ENCODE measurements at regions of chr7 and their contacts with region 1.

Region 1: DNA sequence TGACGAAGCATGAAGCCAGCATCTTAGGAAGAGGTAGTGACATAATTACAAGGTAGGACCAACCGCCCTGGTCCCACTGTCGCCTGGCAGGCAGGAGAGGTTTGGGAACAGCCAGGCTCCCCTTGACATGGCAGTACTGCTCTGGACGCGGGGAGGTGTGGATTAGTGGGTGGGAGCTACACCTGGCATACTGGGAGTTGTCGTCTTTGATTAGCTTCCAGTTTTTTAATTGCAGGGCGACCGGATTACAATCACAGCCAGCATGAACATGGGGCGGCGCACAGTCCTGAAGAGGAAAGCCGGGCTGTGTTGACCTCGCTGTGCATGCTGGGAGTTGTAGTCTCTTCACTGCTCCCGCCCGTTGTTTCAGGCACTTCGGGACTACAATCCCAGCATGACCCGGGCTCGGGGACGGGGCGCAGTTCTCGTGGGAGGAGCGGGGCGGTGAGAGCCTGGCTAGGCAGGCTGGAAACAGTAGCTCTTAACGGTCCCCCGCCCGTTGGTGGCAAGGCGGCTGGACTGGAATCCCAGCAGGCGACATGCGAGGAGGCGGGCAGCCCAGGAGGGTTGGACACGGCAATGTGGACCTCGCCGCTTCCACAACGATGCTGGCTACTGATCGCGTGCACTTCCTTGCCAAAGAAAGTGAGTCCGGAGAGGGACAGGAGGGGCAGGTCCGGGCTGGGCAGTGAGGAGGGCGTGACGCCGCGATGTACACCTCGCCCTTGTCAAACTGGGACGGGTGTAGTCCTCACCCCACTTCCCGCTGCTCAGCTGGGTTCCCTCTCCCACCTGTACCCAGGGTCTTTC is 98.0 kb upstream of the ZNF722 start:
- DNase-seq: peak; percentile 82 to 94 (median 88)
- ATAC-seq: peak; percentile 93
- H3K4me3 ChIP-seq: peak overlapping the region; percentile 67 to 98
- H3K4me3 Mint-ChIP-seq: peak overlapping the region; percentile 92
- H3K27ac ChIP-seq: peak overlapping the region; percentile 83 to 96
- H3K27ac Mint-ChIP-seq: peak overlapping the region; percentile 93
- H3K4me1 ChIP-seq: peaks cover 4% of the 10 kb centered on the region
- H3K4me1 Mint-ChIP-seq: peaks cover 6% of the 10 kb centered on the region
- H3K27me3 ChIP-seq: no peaks in the 10 kb centered on the region
- H3K27me3 Mint-ChIP-seq: no peaks in the 10 kb centered on the region
- CTCF ChIP-seq: no peak

Region 2: GRCh38 chr7:63925623-63926460 is 25.2 kb after region 1 on chr7:
- CTCF ChIA-PET with region 1: interaction called, 3 read pairs
- POLR2A ChIA-PET with region 1: interaction called, 6 read pairs
- intact Hi-C with region 1: loop called in 1 of 2 experiments (anchors 1 kb)
- DNase-seq: peak; percentile 80 to 95 (median 90)
- ATAC-seq: peak; percentile 95
- H3K4me3 ChIP-seq: peak overlapping the region; percentile 76 to 93
- H3K4me3 Mint-ChIP-seq: peak overlapping the region; percentile 94
- H3K27ac ChIP-seq: peak overlapping the region; percentile 84 to 88
- H3K27ac Mint-ChIP-seq: peak overlapping the region; percentile 92
- H3K4me1 ChIP-seq: no peaks in the 10 kb centered on the region
- H3K4me1 Mint-ChIP-seq: peaks cover 13% of the 10 kb centered on the region
- H3K27me3 ChIP-seq: no peaks in the 10 kb centered on the region
- H3K27me3 Mint-ChIP-seq: no peaks in the 10 kb centered on the region
- CTCF ChIP-seq: no peak

Region 3: GRCh38 chr7:64313740-64314491 is 413.3 kb after region 1 on chr7 and contains the start of gene ZNF736:
- CTCF ChIA-PET with region 1: no interaction called
- POLR2A ChIA-PET with region 1: interaction called, 3 read pairs
- intact Hi-C with region 1: loop called in 1 of 2 experiments (anchors 5 kb)
- DNase-seq: peak; percentile 71 to 94 (median 86)
- ATAC-seq: peak; percentile 100
- H3K4me3 ChIP-seq: peak within 1 kb of the TSS; percentile 66 to 98
- H3K4me3 Mint-ChIP-seq: peak within 1 kb of the TSS; percentile 99
- H3K27ac ChIP-seq: peak within 1 kb of the TSS; percentile 76 to 88
- H3K27ac Mint-ChIP-seq: peak within 1 kb of the TSS; percentile 98
- H3K4me1 ChIP-seq: peaks cover 25% of the 10 kb centered on the region
- H3K4me1 Mint-ChIP-seq: peaks cover 32% of the 10 kb centered on the region
- H3K27me3 ChIP-seq: no peaks in the 10 kb centered on the region
- H3K27me3 Mint-ChIP-seq: no peaks in the 10 kb centered on the region
- CTCF ChIP-seq: no peak
- total RNA-seq, gene ZNF736: 23.4 to 26.6 TPM

Region 4: GRCh38 chr7:64630496-64630895 is 729.9 kb after region 1 on chr7:
- CTCF ChIA-PET with region 1: no interaction called
- POLR2A ChIA-PET with region 1: no interaction called
- intact Hi-C with region 1: no loop called
- DNase-seq: peak in 2 of 9 experiments; percentile 22 to 32
- ATAC-seq: peak; percentile 36
- H3K4me3 ChIP-seq: no peak overlapping the region
- H3K4me3 Mint-ChIP-seq: no peak overlapping the region
- H3K27ac ChIP-seq: no peak overlapping the region
- H3K27ac Mint-ChIP-seq: no peak overlapping the region
- H3K4me1 ChIP-seq: no peaks in the 10 kb centered on the region
- H3K4me1 Mint-ChIP-seq: no peaks in the 10 kb centered on the region
- H3K27me3 ChIP-seq: no peaks in the 10 kb centered on the region
- H3K27me3 Mint-ChIP-seq: no peaks in the 10 kb centered on the region
- CTCF ChIP-seq: peak; percentile 46

Region 5: GRCh38 chr7:64665980-64666662 is 765.5 kb after region 1 on chr7 and contains the start of gene ZNF107:
- CTCF ChIA-PET with region 1: no interaction called
- POLR2A ChIA-PET with region 1: no interaction called
- intact Hi-C with region 1: loop called in 1 of 2 experiments (anchors 2 kb)
- DNase-seq: peak; percentile 73 to 94 (median 86)
- ATAC-seq: peak; percentile 95
- H3K4me3 ChIP-seq: peak within 1 kb of the TSS; percentile 93 to 95
- H3K4me3 Mint-ChIP-seq: peak within 1 kb of the TSS; percentile 96
- H3K27ac ChIP-seq: peak within 1 kb of the TSS; percentile 92 to 93
- H3K27ac Mint-ChIP-seq: peak within 1 kb of the TSS; percentile 96
- H3K4me1 ChIP-seq: peaks cover 14% of the 10 kb centered on the region
- H3K4me1 Mint-ChIP-seq: peaks cover 64% of the 10 kb centered on the region
- H3K27me3 ChIP-seq: no peaks in the 10 kb centered on the region
- H3K27me3 Mint-ChIP-seq: no peaks in the 10 kb centered on the region
- CTCF ChIP-seq: no peak
- total RNA-seq, gene ZNF107: 14.0 to 14.7 TPM

Region 6: GRCh38 chr7:65037740-65038678 is 1137.4 kb after region 1 on chr7:
- CTCF ChIA-PET with region 1: no interaction called
- POLR2A ChIA-PET with region 1: no interaction called
- intact Hi-C with region 1: loop called in 1 of 2 experiments (anchors 10 kb)
- DNase-seq: peak; percentile 87 to 97 (median 94)
- ATAC-seq: peak; percentile 89
- H3K4me3 ChIP-seq: peak overlapping the region; percentile 52 to 69
- H3K4me3 Mint-ChIP-seq: peak overlapping the region; percentile 79
- H3K27ac ChIP-seq: peak overlapping the region; percentile 62 to 74
- H3K27ac Mint-ChIP-seq: peak overlapping the region; percentile 80
- H3K4me1 ChIP-seq: peaks cover 11% of the 10 kb centered on the region
- H3K4me1 Mint-ChIP-seq: peaks cover 14% of the 10 kb centered on the region
- H3K27me3 ChIP-seq: no peaks in the 10 kb centered on the region
- H3K27me3 Mint-ChIP-seq: no peaks in the 10 kb centered on the region
- CTCF ChIP-seq: peak; percentile 16

Measured in CD8-positive, alpha-beta T cell (primary cell).